RWPE1 (cell line): ENCODE measurements at regions of chr7 and their contacts with region 1.

Region 1: GRCh38 chr7:67484244-67484751 is 487.7 kb downstream of the TYW1 start:
- DNase-seq: peak; percentile 64
- H3K27ac ChIP-seq: no peak overlapping the region
- CTCF ChIP-seq: peak; percentile 70

Region 2: GRCh38 chr7:67377939-67378862 is 106.1 kb before region 1 on chr7:
- CTCF ChIA-PET with region 1: interaction called, 15 read pairs
- POLR2A ChIA-PET with region 1: no interaction called
- DNase-seq: peak; percentile 29
- H3K27ac ChIP-seq: no peak overlapping the region
- CTCF ChIP-seq: peak; percentile 34; the same call in 1 of the 2 replicates